ENCODE measurements at regions of chrX and their contacts with region 1.

Region 1: DNA sequence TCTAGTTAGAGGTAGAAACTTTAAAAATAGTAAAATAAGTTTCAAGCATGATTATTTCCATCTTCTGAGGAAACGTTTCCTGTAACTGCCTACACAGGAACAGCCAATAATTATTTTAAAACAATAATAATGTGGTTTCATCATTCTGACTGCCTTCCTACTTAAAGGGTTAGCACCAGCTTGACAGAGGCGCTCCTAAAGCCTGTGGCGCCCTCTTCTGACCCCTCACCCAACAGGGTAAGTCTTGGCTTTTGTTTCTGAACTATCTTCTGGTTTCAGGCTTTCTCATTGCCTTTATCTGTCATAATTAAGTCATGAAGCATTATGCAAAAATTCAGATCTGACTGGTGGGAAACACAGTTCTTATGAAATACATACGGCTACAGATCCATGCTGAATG is 96.7 kb downstream of the ITM2A start:
- DNase-seq: peak; percentile 26
- CTCF ChIP-seq: peak; percentile 80

Region 2: DNA sequence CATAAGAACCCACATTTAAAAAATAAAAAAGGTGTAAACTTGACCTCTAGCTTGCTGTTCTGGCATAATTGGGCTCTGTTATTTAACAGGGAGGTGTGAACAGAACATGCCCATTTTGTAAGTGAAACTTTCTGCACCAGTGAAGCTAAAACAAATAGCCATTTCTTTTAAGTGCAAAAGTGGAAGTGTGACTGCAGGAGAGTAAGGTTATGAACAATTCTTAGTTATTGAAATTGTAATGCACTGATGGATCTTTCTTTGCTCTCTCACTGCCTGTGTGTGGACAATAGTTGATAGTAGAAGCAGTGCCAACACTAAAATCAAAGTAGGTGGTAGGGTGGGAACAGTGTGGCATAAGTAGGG is 312.7 kb before region 1 on chrX:
- in situ Hi-C with region 1: loop called (anchors 25 kb)
- DNase-seq: peak; percentile 30
- CTCF ChIP-seq: no peak

Region 3: DNA sequence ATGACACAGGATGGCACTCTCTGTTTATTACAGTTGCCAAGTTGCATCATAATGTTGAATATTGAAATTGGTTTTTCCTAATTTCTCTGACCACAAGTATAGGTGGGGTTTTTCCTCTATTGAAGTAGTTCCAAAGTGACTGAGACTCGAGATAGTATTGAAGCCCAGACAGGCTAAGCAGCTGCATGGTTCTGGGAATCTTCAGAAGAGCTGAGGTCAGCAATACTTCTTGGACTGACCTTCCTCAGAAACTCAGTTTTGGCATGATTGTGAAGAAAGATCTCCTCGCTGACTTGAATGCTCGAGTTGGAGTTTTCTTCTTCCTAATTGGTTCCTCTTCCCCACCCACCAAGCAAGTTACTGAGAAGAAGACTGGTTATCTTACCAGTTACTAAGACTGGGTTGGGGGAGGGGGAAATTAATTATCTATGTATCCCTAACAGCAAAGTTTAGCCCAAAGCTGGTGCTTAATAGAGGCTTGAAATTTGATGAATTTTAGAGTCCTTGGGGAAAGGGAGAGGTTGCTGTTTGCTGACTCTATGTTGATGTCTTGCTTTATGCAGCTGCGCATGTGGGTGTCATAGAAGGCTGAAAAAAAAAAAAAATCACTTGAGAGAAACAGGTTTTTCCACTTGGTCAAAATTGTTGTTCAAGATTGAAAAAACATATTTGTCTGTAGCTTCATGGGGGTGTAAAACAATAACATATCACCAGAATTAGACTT is 234.1 kb before region 1 on chrX:
- in situ Hi-C with region 1: no loop called
- DNase-seq: no peak
- CTCF ChIP-seq: no peak

Region 4: GRCh38 chrX:79146640-79147390 is 123.6 kb before region 1 on chrX:
- in situ Hi-C with region 1: loop called (anchors 10 kb)
- DNase-seq: no peak
- CTCF ChIP-seq: no peak

Region 5: DNA sequence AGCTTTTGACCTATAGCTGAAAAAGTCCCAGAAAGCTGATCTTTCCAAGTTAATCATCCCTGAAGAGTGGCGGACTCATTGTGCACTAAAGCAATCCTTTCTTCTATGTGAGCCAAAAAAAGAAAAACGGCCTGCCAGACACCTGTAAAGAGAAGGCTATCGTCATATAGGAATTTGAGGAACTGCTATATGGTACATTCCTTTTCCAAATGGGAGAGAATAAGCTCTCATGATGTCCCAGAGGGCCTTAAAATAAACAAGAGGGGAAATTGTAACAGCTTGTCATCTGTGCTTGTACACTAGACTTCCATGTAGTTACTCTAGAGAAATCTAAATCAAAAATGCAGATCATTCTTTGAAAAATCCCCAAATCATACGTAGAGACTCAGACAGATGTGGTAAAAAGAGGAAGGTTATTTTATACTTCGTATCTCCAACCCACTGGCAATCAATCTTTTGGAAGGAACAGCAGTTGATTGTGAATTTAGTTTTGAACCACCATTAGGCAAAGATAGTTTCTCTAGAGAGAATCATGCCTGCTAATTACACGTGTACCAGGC is 99.8 kb before region 1 on chrX:
- in situ Hi-C with region 1: no loop called
- DNase-seq: no peak
- CTCF ChIP-seq: no peak

Measured in GM13977 (cell line).